ENCODE measurements at regions of chr13 and their contacts with region 1.

Region 1: DNA sequence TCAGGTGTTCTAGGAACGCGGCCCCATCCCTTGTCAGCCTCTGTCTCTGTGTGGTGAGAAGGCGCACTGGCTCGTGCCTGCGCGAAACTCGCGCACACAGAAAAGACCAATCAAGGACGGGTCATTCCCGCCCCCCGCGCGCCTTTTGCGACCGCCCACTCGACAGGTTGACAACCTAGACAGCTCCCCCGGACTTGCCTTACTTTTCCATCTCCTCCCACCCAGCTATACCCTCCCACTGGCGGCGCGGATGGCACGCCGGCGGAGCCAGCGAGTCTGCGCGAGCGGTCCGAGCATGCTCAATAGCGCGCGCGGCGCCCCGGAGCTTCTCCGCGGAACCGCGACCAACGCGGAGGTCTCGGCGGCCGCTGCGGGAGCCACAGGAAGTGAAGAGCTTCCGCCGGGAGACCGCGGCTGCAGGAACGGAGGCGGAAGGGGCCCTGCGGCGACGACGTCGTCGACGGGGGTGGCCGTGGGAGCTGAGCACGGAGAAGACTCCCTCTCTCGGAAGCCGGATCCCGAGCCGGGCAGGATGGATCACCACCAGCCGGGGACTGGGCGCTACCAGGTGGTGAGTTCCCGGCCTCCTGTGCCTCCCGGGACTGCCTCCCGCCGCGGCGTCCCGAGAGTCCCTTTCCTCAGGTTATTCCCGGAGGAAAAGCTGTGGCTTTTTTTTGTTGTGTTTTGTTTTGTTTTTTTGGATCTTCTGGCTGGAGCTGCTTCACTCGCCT is at the start of gene NDFIP2:
- DNase-seq: no peak
- ATAC-seq: peak; percentile 98
- H3K4me3 ChIP-seq: peak within 1 kb of the TSS; percentile 90 to 92
- H3K27ac ChIP-seq: peak within 1 kb of the TSS; percentile 82
- H3K4me1 ChIP-seq: peaks cover 11% of the 10 kb centered on the region
- H3K27me3 ChIP-seq: no peaks in the 10 kb centered on the region; the same call in 1 of the 2 replicates
- CTCF ChIP-seq: no peak
- total RNA-seq, gene NDFIP2: 29.6 TPM

Region 2: GRCh38 chr13:79385694-79386093 is 95.4 kb before region 1 on chr13:
- CTCF ChIA-PET with region 1: no interaction called
- POLR2A ChIA-PET with region 1: no interaction called
- in situ Hi-C with region 1: no loop called
- intact Hi-C with region 1: no loop called
- DNase-seq: no peak
- ATAC-seq: no peak
- H3K4me3 ChIP-seq: no peak overlapping the region
- H3K27ac ChIP-seq: no peak overlapping the region
- H3K4me1 ChIP-seq: peaks cover 13% of the 10 kb centered on the region
- H3K27me3 ChIP-seq: no peaks in the 10 kb centered on the region
- CTCF ChIP-seq: no peak

Region 3: DNA sequence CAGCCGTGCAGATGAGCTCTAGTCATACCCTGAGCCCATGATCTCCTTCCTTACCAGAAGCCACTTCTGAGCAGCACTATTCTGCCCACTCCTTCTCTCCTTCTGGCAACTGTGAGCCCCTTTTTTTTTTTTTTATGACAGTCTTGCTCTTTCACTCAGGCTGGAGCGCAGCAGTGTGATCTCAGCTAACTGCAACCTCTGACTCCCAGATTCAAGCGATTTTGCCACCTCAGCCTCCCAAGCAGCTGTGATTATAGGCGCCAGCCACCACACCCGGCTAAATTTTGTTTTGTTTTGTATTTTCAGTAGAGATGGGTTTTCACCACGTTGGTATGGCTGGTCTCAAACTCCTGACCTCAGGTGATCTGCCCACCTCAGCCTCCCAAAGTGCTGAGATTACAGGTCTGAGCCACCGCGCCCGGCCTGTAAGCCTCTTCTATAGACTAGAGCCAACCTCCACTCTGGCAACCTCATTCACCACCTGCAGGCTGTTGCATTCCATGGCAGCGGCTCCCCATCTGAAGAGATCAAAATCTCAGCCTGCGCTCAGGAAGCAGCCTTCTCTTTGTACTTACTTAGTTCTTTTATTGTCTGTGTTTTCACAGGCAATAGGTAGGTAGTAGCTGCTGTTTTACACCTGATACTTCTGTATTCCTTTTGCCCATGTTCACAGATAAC is 35.0 kb before region 1 on chr13:
- CTCF ChIA-PET with region 1: interaction called, 10 read pairs
- POLR2A ChIA-PET with region 1: no interaction called
- in situ Hi-C with region 1: no loop called
- intact Hi-C with region 1: no loop called
- DNase-seq: no peak
- ATAC-seq: no peak
- H3K4me3 ChIP-seq: no peak overlapping the region
- H3K27ac ChIP-seq: no peak overlapping the region
- H3K4me1 ChIP-seq: no peaks in the 10 kb centered on the region
- H3K27me3 ChIP-seq: no peaks in the 10 kb centered on the region
- CTCF ChIP-seq: no peak

Measured in Panc1 (cell line).